ENCODE measurements at regions of chr11 and their contacts with region 1.

Region 1: DNA sequence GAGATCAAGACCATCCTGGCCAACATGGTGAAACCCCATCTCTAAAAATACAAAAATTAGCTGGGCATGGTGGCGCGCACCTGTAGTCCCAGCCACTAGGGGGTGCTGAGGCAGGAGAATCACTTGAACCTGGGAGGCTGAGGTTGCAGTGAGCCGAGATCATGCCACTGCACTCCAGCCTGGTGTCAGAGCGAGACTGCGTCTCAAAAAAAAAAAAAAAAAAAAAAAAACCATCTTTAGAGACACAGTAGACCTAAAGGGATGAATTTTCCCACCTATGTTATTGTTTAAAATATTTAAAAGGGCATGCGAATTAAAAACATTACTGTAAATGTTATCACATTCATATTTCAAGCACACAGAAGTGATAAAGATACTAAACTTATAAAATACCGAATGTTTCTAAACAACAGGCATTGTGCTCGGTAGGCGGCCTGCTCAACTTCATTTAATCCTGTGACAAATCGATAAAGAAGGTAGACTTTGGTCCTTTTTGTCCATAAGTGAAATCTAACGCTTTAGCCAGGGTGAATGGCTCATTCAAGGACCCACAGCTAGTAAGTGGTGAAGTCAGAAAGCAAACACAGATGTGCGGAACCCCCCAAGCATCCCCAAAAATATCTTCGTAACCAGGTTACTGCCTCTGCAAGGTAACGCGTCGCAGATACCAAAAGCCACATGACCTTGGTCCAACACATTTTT is 16.1 kb downstream of the NCAPD3 start:
- DNase-seq: peak; percentile 36 to 67 (median 62)
- ATAC-seq: no peak
- H3K4me3 ChIP-seq: no peak overlapping the region
- H3K4me3 Mint-ChIP-seq: peak overlapping the region in 1 of 10 donors; percentile 34
- H3K27ac ChIP-seq: no peak overlapping the region
- H3K27ac Mint-ChIP-seq: no peak overlapping the region
- H3K4me1 ChIP-seq: no peaks in the 10 kb centered on the region
- H3K4me1 Mint-ChIP-seq: peaks cover 2 to 14% (median 7%) of the 10 kb centered on the region in 7 donors
- H3K27me3 ChIP-seq: no peaks in the 10 kb centered on the region
- H3K27me3 Mint-ChIP-seq: no peaks in the 10 kb centered on the region

Region 2: DNA sequence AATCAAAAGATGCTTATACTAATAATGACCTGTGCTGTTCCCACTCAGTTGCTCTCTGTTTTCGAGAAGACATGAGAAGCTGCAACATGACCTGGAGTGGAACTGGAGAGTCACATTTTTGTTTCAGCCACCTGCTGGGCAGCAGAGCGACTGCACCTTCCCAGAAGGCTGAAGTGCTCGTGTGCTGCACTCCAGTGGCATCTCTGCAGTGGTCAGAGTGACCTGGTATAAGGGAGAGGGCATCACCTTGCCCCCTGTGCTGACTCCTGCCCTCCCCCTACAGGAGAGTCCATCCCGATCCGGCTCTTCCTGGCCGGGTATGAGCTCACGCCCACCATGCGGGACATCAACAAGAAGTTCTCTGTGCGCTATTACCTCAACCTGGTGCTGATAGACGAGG is 37.0 kb after region 1 on chr11:
- CTCF ChIA-PET with region 1: interaction called, 4 read pairs
- POLR2A ChIA-PET with region 1: no interaction called
- intact Hi-C with region 1: loop called (anchors 1 kb)
- DNase-seq: peak in 4 of 9 donors; percentile 16 to 41 (median 21)
- ATAC-seq: peak; percentile 63
- H3K4me3 ChIP-seq: no peak overlapping the region
- H3K4me3 Mint-ChIP-seq: no peak overlapping the region
- H3K27ac ChIP-seq: no peak overlapping the region
- H3K27ac Mint-ChIP-seq: peak overlapping the region in 2 of 9 donors; percentile 19 to 43
- H3K4me1 ChIP-seq: no peaks in the 10 kb centered on the region
- H3K4me1 Mint-ChIP-seq: peaks cover 0 to 9% (median 0%) of the 10 kb centered on the region in 7 donors
- H3K27me3 ChIP-seq: no peaks in the 10 kb centered on the region
- H3K27me3 Mint-ChIP-seq: no peaks in the 10 kb centered on the region

Region 3: DNA sequence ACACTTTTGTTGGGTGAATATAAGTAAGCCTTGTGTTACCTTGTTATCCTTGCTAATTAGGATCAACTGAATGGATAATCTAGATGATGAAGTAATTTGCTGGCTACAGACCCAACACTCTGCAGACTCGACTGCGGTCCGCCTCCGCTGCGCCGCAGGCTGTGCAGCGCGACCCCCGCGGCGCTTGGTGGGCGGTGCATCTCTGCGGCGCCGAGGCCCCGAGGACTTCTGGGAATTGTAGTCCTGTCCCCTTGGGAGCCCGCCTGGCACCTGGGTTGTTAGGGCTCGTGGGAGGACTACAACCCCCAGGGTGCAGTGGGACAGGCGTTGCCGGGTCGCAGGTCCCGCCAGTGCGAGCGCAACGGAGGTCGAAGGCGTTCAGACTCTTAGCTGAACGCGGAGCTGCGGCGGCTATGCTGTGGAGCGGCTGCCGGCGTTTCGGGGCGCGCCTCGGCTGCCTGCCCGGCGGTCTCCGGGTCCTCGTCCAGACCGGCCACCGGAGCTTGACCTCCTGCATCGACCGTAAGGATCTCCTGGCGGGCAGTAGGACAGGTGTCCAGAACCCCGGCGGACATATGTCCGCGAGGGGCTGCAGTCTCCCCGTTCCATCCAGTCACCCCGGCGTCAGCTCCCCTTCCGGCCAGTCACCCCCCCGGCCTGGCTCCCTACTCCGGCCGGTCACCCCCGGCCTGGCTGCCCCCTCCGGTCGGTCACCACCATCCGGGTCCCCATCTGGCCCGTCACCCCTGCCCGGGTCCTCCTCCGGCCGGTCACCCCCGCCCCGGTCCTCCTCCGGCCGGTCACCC is 45.7 kb after region 1 on chr11 and contains the starts of genes ACAD8 and THYN1:
- CTCF ChIA-PET with region 1: interaction called, 4 read pairs
- POLR2A ChIA-PET with region 1: no interaction called
- intact Hi-C with region 1: loop called in 1 of 2 experiments (anchors 2 kb)
- DNase-seq: peak; percentile 82 to 98 (median 95)
- ATAC-seq: peak; percentile 100
- H3K4me3 ChIP-seq: peak within 1 kb of the TSS; percentile 89
- H3K4me3 Mint-ChIP-seq: peak within 1 kb of the TSS; percentile 79 to 99 (median 94)
- H3K27ac ChIP-seq: peak within 1 kb of the TSS; percentile 73
- H3K27ac Mint-ChIP-seq: peak within 1 kb of the TSS; percentile 75 to 92 (median 88)
- H3K4me1 ChIP-seq: peaks cover 16 to 18% of the 10 kb centered on the region in 2 donors
- H3K4me1 Mint-ChIP-seq: peaks cover 24 to 47% (median 40%) of the 10 kb centered on the region in 7 donors
- H3K27me3 ChIP-seq: no peaks in the 10 kb centered on the region
- H3K27me3 Mint-ChIP-seq: no peaks in the 10 kb centered on the region
- total RNA-seq, gene ACAD8: 18.5 to 40.2 (median 26.1) TPM
- total RNA-seq, gene THYN1: 34.4 to 67.7 (median 62.5) TPM

Region 4: DNA sequence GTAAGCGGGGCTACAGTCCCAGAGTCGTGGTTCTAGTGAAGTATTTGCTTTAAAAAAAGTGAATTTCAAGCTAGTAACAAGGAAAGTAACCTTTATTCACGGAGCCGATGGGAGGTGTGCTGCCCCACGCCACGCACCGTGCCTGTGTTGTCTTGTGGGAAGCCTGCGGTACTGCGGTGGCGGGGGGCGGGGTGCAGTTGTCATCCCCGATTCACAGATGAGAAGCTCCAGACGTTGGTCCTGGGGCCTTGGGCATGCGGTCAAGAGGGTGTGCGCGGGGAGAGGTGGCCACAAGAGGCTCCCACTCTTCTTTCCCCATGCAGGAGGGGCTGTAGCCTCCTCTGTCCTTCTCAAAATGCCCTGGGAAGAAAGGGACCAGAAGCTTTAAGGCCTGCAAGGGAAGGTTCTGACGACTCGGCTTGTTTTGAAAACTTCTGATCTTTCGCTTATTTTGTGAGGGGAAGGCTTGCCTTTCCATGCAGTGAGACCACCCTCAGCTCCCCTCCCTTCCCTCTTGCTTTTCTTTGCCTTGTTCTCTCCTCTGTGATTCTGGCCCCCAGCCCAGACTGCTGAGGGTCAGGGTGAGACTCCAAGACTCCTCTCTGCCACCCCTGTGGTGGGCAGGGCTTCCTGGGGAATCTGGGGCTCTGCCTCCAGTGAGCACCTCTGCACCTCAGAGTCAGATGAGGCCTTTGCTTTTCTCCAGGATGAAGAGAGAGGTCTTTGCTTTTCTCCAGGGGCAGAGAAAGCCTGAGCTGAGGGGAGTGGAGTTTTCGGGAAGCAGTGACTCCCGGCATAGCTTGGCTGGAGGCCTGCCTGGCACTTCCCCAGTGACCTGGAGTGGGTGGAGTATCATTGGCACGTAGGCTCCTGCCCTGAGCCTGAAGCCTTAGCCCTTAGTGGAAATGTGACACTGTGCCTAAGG is 74.7 kb after region 1 on chr11:
- CTCF ChIA-PET with region 1: no interaction called
- POLR2A ChIA-PET with region 1: no interaction called
- intact Hi-C with region 1: no loop called
- DNase-seq: no peak
- ATAC-seq: no peak
- H3K4me3 ChIP-seq: no peak overlapping the region
- H3K4me3 Mint-ChIP-seq: no peak overlapping the region
- H3K27ac ChIP-seq: no peak overlapping the region
- H3K27ac Mint-ChIP-seq: no peak overlapping the region
- H3K4me1 ChIP-seq: no peaks in the 10 kb centered on the region
- H3K4me1 Mint-ChIP-seq: peaks cover 0 to 12% (median under 1%) of the 10 kb centered on the region in 7 donors
- H3K27me3 ChIP-seq: no peaks in the 10 kb centered on the region
- H3K27me3 Mint-ChIP-seq: peaks cover 0 to 5% (median under 1%) of the 10 kb centered on the region in 5 donors

Region 5: DNA sequence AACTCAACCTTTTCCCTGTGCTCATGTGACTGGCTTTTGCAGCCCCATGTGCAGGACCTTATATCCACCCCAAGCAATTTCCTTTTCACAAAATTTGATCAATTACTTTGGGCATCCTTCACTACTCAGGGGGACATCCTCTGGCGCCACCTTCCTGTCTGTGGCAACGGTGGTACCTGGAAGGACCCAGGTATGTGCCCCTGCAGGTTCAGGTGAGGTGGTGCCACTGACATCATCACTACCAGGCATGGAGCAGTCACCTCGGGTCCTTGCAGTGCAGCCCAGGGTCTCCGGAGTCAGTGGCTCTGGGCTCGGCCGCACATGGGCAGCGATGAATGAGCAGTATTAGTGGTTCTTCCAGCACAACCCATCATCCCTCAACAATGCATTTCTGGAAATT is 242.0 kb after region 1 on chr11:
- CTCF ChIA-PET with region 1: no interaction called
- POLR2A ChIA-PET with region 1: no interaction called
- intact Hi-C with region 1: loop called in 1 of 2 experiments (anchors 5 kb)
- DNase-seq: peak in 2 of 9 donors; percentile 4 to 10
- ATAC-seq: no peak
- H3K4me3 ChIP-seq: no peak overlapping the region
- H3K4me3 Mint-ChIP-seq: no peak overlapping the region
- H3K27ac ChIP-seq: no peak overlapping the region
- H3K27ac Mint-ChIP-seq: no peak overlapping the region
- H3K4me1 ChIP-seq: no peaks in the 10 kb centered on the region
- H3K4me1 Mint-ChIP-seq: no peaks in the 10 kb centered on the region
- H3K27me3 ChIP-seq: no peaks in the 10 kb centered on the region
- H3K27me3 Mint-ChIP-seq: peaks cover 0 to 19% (median 7%) of the 10 kb centered on the region in 5 donors